ENCODE measurements at regions of chr6 and their contacts with region 1.

Region 1: DNA sequence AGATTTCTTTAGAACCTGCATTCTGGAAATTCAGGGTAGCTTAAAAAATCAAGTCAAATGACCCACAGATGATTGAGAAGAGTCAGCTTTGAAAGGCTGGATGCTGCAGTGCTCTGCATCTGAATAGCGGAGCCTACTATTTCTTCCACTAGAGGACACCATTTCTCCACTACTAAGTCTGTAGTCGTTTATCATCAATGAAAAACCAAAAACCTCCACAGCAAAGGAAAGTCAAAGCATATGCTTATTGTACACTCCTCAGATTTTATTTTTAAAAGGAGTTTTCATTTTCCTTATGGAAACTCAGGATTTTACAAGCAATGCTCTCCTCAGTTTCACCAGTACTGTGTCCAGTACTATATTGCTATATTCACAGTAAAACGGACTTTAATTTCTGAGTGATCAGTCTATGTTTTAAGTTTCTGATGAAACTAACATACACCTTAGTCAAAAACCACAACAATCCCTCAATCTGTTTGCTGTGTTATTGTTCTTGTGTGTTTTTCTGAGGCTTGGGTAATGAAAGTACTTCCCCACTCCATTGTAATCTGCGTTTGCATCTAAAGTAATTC is 50.5 kb upstream of the ENPP5 start:
- DNase-seq: peak; percentile 68
- ATAC-seq: peak; percentile 53
- H3K4me3 ChIP-seq: no peak overlapping the region
- H3K4me3 Mint-ChIP-seq: no peak overlapping the region
- H3K27ac ChIP-seq: peak overlapping the region in 1 of 2 donors; percentile 43
- H3K27ac Mint-ChIP-seq: peak overlapping the region; percentile 93
- H3K4me1 ChIP-seq: peaks cover 23 to 33% of the 10 kb centered on the region in 2 donors
- H3K4me1 Mint-ChIP-seq: peaks cover 46% of the 10 kb centered on the region
- H3K27me3 ChIP-seq: no peaks in the 10 kb centered on the region
- H3K27me3 Mint-ChIP-seq: no peaks in the 10 kb centered on the region
- CTCF ChIP-seq: peak; percentile 87

Region 2: GRCh38 chr6:46090115-46091079 is 130.9 kb before region 1 on chr6:
- CTCF ChIA-PET with region 1: interaction called, 84 read pairs
- POLR2A ChIA-PET with region 1: no interaction called
- intact Hi-C with region 1: loop called (anchors 1 kb)
- DNase-seq: peak; percentile 70
- ATAC-seq: peak; percentile 54
- H3K4me3 ChIP-seq: no peak overlapping the region
- H3K4me3 Mint-ChIP-seq: no peak overlapping the region
- H3K27ac ChIP-seq: no peak overlapping the region
- H3K27ac Mint-ChIP-seq: no peak overlapping the region
- H3K4me1 ChIP-seq: no peaks in the 10 kb centered on the region
- H3K4me1 Mint-ChIP-seq: no peaks in the 10 kb centered on the region
- H3K27me3 ChIP-seq: peaks cover 0 to 3% (median 1%) of the 10 kb centered on the region in 4 experiments
- H3K27me3 Mint-ChIP-seq: peaks cover 24% of the 10 kb centered on the region
- CTCF ChIP-seq: peak; percentile 93

Region 3: GRCh38 chr6:46258249-46258648 is 36.9 kb after region 1 on chr6:
- CTCF ChIA-PET with region 1: no interaction called
- POLR2A ChIA-PET with region 1: no interaction called
- intact Hi-C with region 1: no loop called
- DNase-seq: no peak
- ATAC-seq: no peak
- H3K4me3 ChIP-seq: no peak overlapping the region
- H3K4me3 Mint-ChIP-seq: no peak overlapping the region
- H3K27ac ChIP-seq: no peak overlapping the region
- H3K27ac Mint-ChIP-seq: no peak overlapping the region
- H3K4me1 ChIP-seq: no peaks in the 10 kb centered on the region
- H3K4me1 Mint-ChIP-seq: no peaks in the 10 kb centered on the region
- H3K27me3 ChIP-seq: peaks cover 0 to 12% (median 1%) of the 10 kb centered on the region in 4 experiments
- H3K27me3 Mint-ChIP-seq: no peaks in the 10 kb centered on the region
- CTCF ChIP-seq: no peak

Region 4: GRCh38 chr6:46410334-46410953 is 189.1 kb after region 1 on chr6:
- CTCF ChIA-PET with region 1: interaction called, 216 read pairs
- POLR2A ChIA-PET with region 1: no interaction called
- intact Hi-C with region 1: loop called (anchors 1 kb)
- DNase-seq: peak; percentile 74
- ATAC-seq: peak; percentile 43
- H3K4me3 ChIP-seq: no peak overlapping the region
- H3K4me3 Mint-ChIP-seq: no peak overlapping the region
- H3K27ac ChIP-seq: no peak overlapping the region
- H3K27ac Mint-ChIP-seq: no peak overlapping the region
- H3K4me1 ChIP-seq: no peaks in the 10 kb centered on the region
- H3K4me1 Mint-ChIP-seq: no peaks in the 10 kb centered on the region
- H3K27me3 ChIP-seq: no peaks in the 10 kb centered on the region
- H3K27me3 Mint-ChIP-seq: no peaks in the 10 kb centered on the region
- CTCF ChIP-seq: peak; percentile 97

Region 5: DNA sequence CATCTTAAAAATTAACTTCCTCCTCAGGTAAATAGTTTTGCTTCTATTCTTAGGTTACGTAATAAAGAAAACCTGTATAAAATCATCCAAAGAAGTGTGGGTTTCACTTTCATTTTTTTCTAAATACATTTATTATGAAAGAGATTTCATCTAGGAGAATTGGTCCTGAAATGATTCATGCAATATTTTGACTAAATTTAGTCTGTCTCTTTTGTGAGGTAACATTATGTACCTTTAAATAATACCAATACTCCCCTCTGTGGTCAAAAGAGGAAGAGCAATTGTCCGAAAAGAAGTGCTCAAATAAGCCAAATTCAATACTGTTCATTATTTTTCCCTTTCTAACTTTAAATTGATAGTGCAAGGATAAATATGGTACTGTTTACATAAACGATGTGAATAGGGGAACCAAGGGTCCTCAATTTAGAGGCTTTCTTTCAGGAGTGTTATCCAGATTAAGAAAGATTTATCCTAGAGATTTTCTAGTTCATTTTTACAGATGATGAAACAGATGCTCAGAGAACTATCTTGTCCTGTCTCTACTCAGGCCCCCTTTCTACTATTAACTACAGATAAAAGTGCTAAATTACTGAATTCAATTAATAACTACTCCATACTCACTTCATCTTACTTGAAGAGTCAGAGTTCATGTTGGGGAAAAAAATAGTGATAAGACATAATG is 405.1 kb after region 1 on chr6:
- CTCF ChIA-PET with region 1: interaction called, 4 read pairs
- POLR2A ChIA-PET with region 1: no interaction called
- intact Hi-C with region 1: loop called (anchors 1 kb)
- DNase-seq: peak; percentile 31
- ATAC-seq: no peak
- H3K4me3 ChIP-seq: no peak overlapping the region
- H3K4me3 Mint-ChIP-seq: no peak overlapping the region
- H3K27ac ChIP-seq: no peak overlapping the region
- H3K27ac Mint-ChIP-seq: no peak overlapping the region
- H3K4me1 ChIP-seq: no peaks in the 10 kb centered on the region
- H3K4me1 Mint-ChIP-seq: peaks cover 9% of the 10 kb centered on the region
- H3K27me3 ChIP-seq: peaks cover 0 to 4% (median 0%) of the 10 kb centered on the region in 4 experiments
- H3K27me3 Mint-ChIP-seq: peaks cover 18% of the 10 kb centered on the region
- CTCF ChIP-seq: peak; percentile 71

Region 6: DNA sequence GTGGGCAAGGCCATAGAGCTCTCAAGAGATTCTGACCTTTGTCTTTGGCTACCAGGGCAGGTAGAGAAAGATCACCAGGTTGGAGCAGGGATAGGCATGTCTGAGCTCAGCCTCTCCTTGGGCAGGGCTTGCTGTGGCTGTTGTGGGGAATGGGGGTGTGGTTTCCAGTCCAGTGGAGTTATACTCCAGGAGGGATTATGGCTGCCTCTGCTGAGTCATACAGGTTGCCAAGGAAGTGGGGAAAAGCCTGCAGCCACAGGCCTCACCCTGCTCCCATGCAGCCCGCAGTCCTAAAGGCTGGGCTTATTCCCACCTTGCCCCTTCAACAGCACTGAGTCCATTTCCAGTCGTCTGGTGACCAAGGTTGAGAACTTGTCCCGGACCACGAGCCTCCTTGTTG is 593.8 kb after region 1 on chr6:
- CTCF ChIA-PET with region 1: no interaction called
- POLR2A ChIA-PET with region 1: no interaction called
- intact Hi-C with region 1: no loop called
- DNase-seq: no peak
- ATAC-seq: no peak
- H3K4me3 ChIP-seq: no peak overlapping the region
- H3K4me3 Mint-ChIP-seq: no peak overlapping the region
- H3K27ac ChIP-seq: no peak overlapping the region
- H3K27ac Mint-ChIP-seq: no peak overlapping the region
- H3K4me1 ChIP-seq: no peaks in the 10 kb centered on the region
- H3K4me1 Mint-ChIP-seq: no peaks in the 10 kb centered on the region
- H3K27me3 ChIP-seq: no peaks in the 10 kb centered on the region
- H3K27me3 Mint-ChIP-seq: peaks cover 21% of the 10 kb centered on the region
- CTCF ChIP-seq: no peak

Region 7: GRCh38 chr6:46862381-46862780 is 641.1 kb after region 1 on chr6:
- CTCF ChIA-PET with region 1: no interaction called
- POLR2A ChIA-PET with region 1: no interaction called
- intact Hi-C with region 1: loop called (anchors 5 kb)
- DNase-seq: no peak
- ATAC-seq: no peak
- H3K4me3 ChIP-seq: no peak overlapping the region
- H3K4me3 Mint-ChIP-seq: no peak overlapping the region
- H3K27ac ChIP-seq: no peak overlapping the region
- H3K27ac Mint-ChIP-seq: no peak overlapping the region
- H3K4me1 ChIP-seq: no peaks in the 10 kb centered on the region
- H3K4me1 Mint-ChIP-seq: no peaks in the 10 kb centered on the region
- H3K27me3 ChIP-seq: no peaks in the 10 kb centered on the region
- H3K27me3 Mint-ChIP-seq: peaks cover 17% of the 10 kb centered on the region
- CTCF ChIP-seq: no peak